Dendritic cell treated with granulocyte-macrophage colony-stimulating factor and Interleukin-4, amounts not matched to agents 40 ng/mL and 50 ng/mL, for 4 days (primary cell): ENCODE measurements at regions of chr11 and their contacts with region 1.

Region 1: DNA sequence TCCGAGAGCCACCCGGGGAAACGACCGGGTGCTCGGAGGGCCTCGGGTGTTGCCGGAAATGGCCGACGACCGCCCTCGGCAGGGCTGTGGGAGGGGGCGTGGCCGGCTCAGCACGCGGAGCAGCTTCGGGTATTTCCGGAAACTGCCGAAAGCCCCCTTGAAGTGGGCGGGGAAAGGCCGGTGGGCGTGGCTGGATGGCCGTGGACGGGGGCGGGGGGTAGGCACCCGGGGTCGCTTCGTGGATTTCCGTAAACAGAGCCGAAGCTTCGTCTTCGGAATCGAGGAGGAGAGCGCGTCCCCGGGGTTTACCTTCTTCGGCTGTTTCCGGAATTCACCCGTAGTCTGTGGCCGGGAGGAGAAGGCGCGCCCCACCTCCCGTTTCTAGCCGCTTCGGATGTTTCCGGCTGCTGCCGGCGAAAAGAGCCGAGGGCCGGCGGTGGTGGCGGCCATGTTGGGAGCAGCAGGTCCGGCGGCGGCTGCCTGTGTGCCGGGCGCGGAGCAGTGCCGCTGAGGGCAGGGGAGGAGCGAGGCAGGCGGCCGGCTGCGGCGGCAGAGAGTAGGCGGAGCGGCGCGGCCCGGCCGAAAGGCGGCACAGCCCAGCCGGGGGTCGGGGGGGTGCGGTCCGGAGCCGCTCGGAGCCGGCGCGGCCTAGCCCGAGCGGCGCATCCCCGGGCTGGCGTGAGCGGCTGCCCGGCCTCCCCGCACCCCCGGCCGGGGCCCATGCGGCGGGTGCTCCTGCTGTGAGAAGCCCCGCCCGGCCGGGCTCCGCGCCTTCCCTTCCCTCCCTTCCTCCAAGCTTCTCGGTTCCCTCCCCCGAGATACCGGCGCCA is at the start of gene MARK2:
- H3K4me3 Mint-ChIP-seq: peak within 1 kb of the TSS; percentile 86
- H3K27ac Mint-ChIP-seq: peak within 1 kb of the TSS; percentile 92
- H3K4me1 Mint-ChIP-seq: peaks cover 60% of the 10 kb centered on the region
- H3K27me3 Mint-ChIP-seq: no peaks in the 10 kb centered on the region

Region 2: DNA sequence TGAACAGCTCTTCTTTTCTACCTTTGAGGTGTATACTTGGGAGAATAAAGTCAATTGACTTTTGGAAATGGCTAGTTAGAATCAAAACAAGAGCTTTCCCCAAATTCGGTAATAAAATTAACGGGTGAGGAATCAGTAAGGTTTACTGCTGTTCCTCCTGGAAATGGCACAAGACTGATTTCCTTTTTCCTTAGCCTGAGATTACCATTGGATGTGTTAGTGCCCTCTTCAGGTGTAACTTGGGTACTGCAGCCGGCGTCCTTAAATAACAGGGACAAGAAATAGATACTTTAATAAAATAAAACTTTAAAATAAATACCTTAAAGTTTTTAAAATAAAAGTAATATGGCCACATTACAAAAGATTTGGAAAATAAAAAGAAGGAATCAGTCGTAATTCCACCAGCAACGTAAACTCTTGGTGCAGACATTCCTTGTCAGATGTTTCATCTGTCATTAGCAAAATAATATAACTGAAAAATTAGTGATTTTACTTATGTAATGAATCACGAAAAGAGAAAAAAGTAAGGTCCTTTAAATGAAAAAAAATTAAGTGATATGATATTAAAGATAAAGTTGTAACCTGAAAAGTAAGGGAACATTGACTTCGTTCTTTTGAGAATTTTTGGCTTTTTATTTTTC is 100.1 kb before region 1 on chr11:
- intact Hi-C with region 1: no loop called
- H3K4me3 Mint-ChIP-seq: no peak overlapping the region
- H3K27ac Mint-ChIP-seq: no peak overlapping the region
- H3K4me1 Mint-ChIP-seq: peaks cover 20% of the 10 kb centered on the region
- H3K27me3 Mint-ChIP-seq: no peaks in the 10 kb centered on the region

Region 3: DNA sequence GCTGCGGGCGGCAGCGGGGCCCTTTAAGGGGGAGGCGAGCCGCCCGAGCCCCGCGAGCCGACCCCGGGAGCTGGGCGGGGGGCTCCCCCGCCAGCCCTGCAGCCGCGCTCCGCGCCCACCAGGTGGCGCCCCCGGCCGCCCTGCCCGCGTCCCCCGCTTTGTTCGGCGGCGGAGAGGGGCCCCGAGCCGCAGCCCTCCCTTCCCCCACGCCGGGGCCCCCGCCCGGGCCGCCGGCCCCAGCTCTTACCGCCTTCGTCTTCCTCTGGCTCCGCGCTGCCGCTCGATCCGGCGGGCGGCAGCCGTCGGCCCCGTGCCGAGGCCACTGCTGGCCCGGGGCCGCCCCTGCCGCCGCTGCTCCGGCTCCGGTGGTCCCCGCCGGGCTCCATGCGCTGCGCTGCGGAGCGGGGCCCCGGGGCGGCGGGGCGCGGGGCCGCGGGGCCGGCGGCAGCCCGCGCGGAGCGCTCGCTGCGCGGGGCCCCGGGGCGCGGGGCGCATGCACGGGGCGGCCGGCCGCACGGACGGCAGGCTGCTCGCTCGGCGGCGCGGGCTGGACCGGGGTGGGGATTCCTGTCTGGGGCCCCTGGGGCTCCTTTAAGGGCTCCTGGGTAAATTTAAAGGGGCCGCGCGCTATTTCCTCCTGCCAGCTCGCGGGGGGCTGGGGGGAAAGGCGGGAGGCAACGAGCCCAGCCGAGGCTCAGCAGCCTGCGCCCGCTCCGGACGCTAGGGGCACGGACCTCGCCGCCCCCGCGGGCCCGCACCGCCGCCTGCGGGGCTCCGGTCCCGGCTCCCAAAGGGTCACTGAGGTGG is 70.5 kb before region 1 on chr11 and contains the start of gene ZFTA:
- intact Hi-C with region 1: loop called (anchors 10 kb)
- H3K4me3 Mint-ChIP-seq: peak within 1 kb of the TSS; percentile 93
- H3K27ac Mint-ChIP-seq: peak within 1 kb of the TSS; percentile 76
- H3K4me1 Mint-ChIP-seq: peaks cover 34% of the 10 kb centered on the region
- H3K27me3 Mint-ChIP-seq: peaks cover 39% of the 10 kb centered on the region

Region 4: GRCh38 chr11:63871962-63872799 is 33.3 kb after region 1 on chr11:
- intact Hi-C with region 1: loop called (anchors 1 kb)
- H3K4me3 Mint-ChIP-seq: peak overlapping the region; percentile 48
- H3K27ac Mint-ChIP-seq: peak overlapping the region; percentile 82
- H3K4me1 Mint-ChIP-seq: peaks cover 82% of the 10 kb centered on the region
- H3K27me3 Mint-ChIP-seq: no peaks in the 10 kb centered on the region

Region 5: DNA sequence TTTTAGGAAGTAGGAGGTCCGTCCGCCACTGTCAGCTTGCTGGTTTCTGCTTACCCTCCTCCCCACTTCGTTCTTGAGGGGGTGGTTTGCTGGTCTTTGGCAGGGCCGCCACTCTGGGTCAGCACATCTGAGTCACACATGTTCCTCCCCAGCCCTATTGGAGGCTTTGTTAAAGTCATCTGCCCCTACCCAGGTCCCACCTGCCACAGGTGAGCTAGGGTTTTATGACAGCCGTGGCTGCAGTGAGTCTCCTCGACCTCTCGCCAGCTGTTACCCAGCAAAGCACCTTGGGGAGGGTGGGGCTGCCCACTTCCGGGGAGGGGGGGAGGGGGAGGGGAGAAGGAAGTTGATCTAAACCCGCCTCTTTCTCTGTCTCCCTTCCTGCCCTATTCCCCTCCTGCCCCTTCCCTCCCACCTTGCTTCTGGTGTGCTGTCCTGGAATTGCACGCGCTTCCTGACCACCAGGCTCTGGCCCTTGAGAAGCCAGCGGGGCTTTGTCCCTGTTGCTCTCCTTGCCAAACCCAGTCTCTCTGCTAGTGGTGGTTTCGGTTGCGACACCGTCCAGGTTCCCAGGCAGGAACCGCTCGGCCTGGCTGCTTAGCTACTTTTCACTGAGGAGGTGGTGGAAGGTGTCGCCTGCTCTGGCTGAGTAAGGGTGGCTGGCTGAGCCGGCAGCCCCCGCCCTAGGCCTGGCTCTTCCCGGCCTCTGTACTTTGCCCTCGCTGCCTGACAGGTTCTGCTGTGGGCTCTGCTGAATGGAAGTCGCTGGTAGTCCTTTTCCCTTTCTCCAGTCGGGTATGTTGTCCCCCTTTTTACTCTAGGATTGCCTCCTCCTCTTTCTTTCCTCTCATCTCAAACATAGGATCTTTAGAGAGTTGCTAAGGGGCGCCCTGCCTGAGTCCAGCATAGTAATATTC is 49.5 kb after region 1 on chr11:
- intact Hi-C with region 1: loop called (anchors 5 kb)
- H3K4me3 Mint-ChIP-seq: peak overlapping the region; percentile 83
- H3K27ac Mint-ChIP-seq: peak overlapping the region; percentile 91
- H3K4me1 Mint-ChIP-seq: peaks cover 88% of the 10 kb centered on the region
- H3K27me3 Mint-ChIP-seq: no peaks in the 10 kb centered on the region

Region 6: DNA sequence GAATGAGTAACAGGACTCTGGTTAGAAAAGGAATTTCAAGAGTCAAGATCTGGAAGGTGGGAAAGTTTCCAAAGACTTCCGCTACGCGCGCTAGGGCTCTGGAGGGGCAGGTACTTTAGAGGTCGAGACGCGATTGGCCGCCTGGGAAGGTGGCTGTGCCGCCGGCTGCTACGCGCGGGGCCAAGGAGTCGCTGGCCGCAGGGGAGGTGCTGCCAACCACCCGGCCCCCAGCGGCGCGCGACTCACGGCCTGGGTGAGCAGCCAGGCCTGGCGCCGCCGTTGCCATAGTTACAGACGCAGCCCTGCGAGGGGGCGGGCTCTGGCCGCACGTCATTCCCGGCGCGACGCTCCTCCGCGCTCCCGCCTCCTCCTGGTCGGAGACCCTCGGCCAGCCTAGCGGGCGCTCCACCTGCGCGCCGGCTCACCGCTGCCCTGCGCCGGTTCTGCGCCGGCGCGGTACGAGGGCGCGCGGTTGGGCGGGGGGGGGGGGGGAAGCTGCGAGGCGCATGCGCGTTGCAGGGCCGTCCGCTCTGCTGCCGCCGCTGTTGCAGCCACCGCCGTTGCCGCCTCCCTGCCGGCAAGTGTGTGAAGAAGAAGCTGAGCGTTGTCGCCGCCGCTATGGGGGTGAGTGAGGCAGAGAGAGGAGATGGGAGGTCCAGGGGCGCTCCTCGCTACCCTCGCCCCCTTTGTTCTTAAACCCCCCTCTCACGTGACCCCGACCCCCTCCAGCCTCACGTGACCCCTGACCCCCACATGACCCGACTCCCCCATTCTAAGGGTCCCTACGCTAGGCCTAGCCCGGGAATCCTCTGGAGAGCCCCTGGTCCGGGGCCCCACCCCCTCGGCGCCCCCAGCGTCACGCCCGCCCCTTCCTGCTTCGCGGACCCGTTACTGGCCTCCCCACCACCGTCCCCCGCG is 99.8 kb after region 1 on chr11 and contains the start of gene NAA40:
- intact Hi-C with region 1: loop called (anchors 2 kb)
- H3K4me3 Mint-ChIP-seq: peak within 1 kb of the TSS; percentile 86
- H3K27ac Mint-ChIP-seq: peak within 1 kb of the TSS; percentile 77
- H3K4me1 Mint-ChIP-seq: peaks cover 37% of the 10 kb centered on the region
- H3K27me3 Mint-ChIP-seq: peaks cover 8% of the 10 kb centered on the region

Region 7: DNA sequence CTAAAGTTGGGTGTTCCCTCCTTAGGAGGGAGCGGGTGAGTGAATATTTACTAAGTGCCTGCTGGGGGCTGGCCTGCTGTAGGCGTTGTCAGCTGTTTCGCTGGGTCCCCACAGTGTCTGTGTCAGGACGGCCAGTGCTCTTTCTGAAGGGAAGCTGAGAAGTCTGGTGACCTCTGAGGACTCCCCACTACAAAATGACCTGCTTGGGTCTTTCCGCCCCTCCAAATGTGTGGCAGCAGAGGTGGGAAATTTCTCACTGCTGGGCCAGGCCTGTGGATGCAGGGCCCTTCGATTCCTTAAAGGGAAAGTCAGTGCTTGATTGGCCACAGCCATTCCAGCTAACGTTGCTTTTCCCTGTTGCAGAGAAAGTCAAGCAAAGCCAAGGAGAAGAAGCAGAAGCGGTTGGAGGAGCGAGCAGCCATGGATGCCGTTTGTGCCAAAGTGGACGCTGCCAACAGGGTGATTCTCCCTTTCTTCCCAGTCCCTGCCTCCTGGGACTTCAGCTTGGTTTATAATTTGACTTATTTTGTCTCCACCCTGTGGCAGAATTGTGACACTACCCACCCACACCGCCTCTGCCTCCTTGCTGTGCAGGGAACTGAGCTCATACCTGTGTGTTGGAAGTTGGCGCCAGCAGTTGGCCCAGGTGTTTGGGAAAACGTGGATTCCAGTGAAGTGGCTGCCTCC is 106.7 kb after region 1 on chr11:
- intact Hi-C with region 1: loop called (anchors 1 kb)
- H3K4me3 Mint-ChIP-seq: no peak overlapping the region
- H3K27ac Mint-ChIP-seq: no peak overlapping the region
- H3K4me1 Mint-ChIP-seq: peaks cover 34% of the 10 kb centered on the region
- H3K27me3 Mint-ChIP-seq: no peaks in the 10 kb centered on the region